ENCODE measurements at regions of chr21 and their contacts with region 1.

Region 1: DNA sequence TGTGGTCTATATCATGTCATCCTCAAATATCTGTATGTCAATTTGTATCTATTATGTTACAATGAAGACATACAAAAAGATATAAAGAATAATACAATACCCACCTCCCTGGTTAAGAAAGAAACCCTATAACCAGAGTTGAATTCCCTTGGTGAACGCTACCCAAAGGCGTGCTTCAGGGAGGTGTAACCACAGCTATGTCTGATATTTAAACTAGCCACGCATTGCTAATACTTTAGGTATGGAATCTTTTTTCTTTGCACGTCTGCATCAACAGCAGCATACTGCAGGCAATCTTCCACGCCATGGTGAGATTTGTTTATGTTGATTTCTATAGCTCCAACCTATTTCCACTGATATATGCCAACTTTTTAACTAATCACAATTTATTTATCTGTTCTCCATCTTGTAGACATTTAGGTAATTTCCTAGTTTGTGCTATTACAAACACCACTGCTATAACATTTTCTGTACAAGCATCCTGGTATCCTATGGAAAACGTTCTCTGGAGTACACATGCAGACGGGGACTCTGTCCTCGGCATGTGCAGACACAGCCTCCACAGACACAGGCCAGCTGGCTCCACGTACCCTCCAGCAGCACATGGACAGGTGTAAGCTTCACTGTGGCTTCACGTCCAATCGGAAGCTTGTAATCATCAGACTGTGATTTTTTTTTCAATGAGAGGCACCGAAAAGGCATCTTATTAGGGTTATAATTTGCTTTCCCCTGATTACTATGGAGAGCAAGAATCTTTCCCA is 58.5 kb downstream of the HSF2BP start:
- DNase-seq: no peak
- ATAC-seq: no peak

Region 2: GRCh38 chr21:43644609-43645008 is 43.8 kb after region 1 on chr21:
- intact Hi-C with region 1: loop called (anchors 5 kb)
- DNase-seq: no peak
- ATAC-seq: no peak